GM12878 (cell line): ENCODE measurements at regions of chr17 and their contacts with region 1.

Region 1: DNA sequence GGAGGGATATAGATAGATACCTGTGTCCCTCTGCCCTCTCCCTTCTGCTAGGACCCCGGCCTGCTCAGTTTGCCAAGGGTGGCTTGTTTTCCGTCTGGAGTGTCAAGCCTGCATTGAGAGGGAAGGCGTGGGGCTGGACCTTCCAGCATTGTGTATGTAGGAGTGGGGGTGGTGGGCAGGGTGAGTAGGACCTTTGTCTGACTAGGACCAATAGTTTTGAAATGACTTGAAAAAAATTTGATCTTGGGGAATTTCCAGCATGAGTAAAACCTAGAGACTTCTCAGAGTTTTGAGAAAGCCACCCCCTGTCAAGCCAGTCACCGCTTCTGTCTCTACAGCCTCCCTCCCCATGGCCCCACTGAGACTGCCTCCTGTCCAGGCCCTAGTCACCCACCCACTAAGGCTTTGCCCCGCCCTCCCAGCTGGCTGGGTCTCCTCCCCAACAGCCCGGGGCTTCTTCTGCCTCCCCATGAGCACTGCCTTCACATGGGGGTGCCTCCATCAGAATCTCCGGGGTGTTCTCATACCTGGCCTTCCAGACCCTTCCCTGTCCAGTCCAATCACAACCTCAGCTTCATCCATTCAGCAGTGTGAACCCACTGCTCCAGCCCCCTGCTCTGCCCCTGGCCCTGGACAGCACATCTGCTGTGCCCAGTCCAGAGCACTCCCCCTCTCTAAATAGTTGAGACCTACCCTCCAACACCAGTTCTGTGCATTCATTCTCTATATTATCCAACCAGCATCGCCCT is 207.0 kb downstream of the MSI2 start:
- DNase-seq: peak; percentile 97
- ATAC-seq: peak; percentile 91
- H3K4me3 ChIP-seq: peak overlapping the region; percentile 55
- H3K27ac ChIP-seq: peak overlapping the region; percentile 99
- H3K4me1 ChIP-seq: peaks cover 91% of the 10 kb centered on the region
- H3K27me3 ChIP-seq: no peaks in the 10 kb centered on the region
- CTCF ChIP-seq: no peak
- EP300 ChIP-seq: peak; percentile 95 to 96
- POLR2A ChIP-seq: peak; percentile 75
- RAD21 ChIP-seq: no peak

Region 2: DNA sequence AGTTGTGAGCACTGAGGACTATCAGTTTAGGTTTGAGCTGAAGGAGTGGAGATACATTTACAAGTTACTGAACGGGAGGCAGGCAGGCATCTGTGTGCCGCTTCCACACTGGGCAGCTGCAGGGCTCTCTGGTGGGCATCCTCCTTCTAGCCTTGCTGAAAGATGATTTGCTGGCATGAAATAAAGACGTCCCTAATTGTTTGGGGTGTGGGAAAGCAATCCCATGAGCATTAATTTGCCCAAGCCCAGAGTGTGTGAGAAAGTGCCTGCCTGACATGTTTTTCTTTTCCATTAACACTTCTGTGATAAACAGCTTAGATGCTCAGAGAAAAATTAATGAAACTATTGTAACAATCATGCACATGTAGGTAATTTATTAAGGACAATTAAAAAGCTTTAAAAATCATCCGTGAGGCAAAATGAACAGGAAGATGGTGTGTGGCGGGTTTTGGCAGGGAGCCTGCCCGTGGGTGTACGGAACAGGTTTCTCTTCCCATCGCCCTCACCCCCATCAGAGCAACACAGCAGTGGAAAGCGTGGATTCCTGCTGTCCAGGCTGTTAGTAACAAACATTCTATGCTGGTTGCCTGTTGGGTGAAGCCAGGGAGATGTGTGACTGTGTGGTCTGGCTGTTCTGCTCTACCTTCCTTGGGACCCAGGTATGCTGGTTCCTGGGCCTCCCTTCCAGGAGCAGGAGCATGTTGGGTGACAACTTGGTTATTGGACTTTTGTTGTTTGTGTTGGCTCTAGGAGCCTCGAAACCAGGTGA is 15.1 kb before region 1 on chr17:
- CTCF ChIA-PET with region 1: interaction called, 4 read pairs
- POLR2A ChIA-PET with region 1: interaction called, 9 read pairs
- RAD21 ChIA-PET with region 1: interaction called, 12 read pairs
- SMC1A ChIA-PET with region 1: interaction called, 14 read pairs
- in situ Hi-C with region 1: no loop called
- intact Hi-C with region 1: no loop called
- DNase-seq: no peak
- ATAC-seq: no peak
- H3K4me3 ChIP-seq: no peak overlapping the region
- H3K27ac ChIP-seq: peak overlapping the region; percentile 7
- H3K4me1 ChIP-seq: peaks cover 62% of the 10 kb centered on the region
- H3K27me3 ChIP-seq: no peaks in the 10 kb centered on the region
- CTCF ChIP-seq: no peak
- EP300 ChIP-seq: no peak
- POLR2A ChIP-seq: no peak
- RAD21 ChIP-seq: no peak

Region 3: DNA sequence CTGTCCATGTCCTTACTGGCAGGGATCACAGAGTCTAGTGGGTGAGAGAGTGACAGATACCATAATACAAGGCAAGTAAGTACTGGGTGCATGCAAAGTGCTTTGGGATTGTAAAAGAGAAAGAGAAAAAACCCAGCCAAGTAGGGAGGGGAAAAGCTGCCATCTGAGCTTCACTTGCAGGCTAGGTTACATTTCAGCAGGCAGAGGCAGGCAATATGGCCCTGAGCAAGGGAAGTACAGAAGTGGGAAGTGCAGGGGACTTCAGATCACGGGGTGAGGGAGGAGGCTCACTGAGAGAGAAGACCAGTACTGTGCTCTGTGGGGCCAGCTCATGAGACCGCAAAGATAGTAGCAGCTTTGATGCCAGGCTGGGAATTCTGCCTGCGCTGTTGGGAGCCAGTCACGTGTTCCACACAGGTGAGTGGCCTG is 23.6 kb after region 1 on chr17:
- CTCF ChIA-PET with region 1: interaction called, 8 read pairs
- POLR2A ChIA-PET with region 1: interaction called, 8 read pairs
- RAD21 ChIA-PET with region 1: interaction called, 28 read pairs
- SMC1A ChIA-PET with region 1: interaction called, 102 read pairs
- in situ Hi-C with region 1: no loop called
- intact Hi-C with region 1: no loop called
- DNase-seq: no peak
- ATAC-seq: peak; percentile 53
- H3K4me3 ChIP-seq: no peak overlapping the region
- H3K27ac ChIP-seq: peak overlapping the region; percentile 72
- H3K4me1 ChIP-seq: peaks cover 35% of the 10 kb centered on the region
- H3K27me3 ChIP-seq: no peaks in the 10 kb centered on the region
- CTCF ChIP-seq: no peak
- EP300 ChIP-seq: no peak
- POLR2A ChIP-seq: no peak
- RAD21 ChIP-seq: no peak